Heart right ventricle (tissue), 16 donors: ENCODE measurements at regions of chr9 and their contacts with region 1.

Region 1: DNA sequence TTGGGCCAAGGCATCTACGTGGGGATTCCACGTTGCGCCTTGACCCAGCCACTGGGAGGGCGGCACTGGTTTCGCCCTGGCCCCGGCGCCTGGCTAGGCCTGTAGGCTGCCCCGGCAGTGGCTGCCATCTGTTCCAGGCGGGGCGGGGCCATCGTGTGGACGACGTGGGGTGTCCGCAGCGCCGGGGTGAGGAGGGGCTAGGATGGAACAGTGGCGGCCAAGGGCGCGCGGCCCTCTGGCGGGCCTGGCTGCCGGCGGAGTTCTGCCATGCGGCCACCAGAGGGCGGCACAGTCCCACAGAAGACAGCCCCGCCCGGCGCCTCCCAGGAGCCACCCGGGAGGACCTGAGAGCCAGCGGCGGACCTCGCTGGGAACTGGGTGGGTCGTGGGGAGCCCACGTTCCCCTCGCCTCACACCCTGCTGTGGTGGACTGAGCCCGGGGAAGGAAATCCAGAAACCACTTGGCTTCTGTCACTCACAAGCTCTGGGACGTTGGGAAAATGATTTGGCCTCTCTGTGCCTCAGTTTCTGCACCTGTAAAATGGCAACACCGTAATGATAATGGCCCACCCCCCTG is 22.6 kb upstream of the RAPGEF1 start:
- DNase-seq: peak; percentile 53 to 79
- ATAC-seq: peak; percentile 89 to 94 (median 92)
- H3K4me3 ChIP-seq: no peak overlapping the region
- H3K27ac ChIP-seq: no peak overlapping the region
- H3K4me1 ChIP-seq: peaks cover 0 to 8% (median 4%) of the 10 kb centered on the region in 9 donors
- H3K27me3 ChIP-seq: peaks cover 0 to 17% (median 9%) of the 10 kb centered on the region in 7 donors
- CTCF ChIP-seq: peak; percentile 83 to 97 (median 96)

Region 2: DNA sequence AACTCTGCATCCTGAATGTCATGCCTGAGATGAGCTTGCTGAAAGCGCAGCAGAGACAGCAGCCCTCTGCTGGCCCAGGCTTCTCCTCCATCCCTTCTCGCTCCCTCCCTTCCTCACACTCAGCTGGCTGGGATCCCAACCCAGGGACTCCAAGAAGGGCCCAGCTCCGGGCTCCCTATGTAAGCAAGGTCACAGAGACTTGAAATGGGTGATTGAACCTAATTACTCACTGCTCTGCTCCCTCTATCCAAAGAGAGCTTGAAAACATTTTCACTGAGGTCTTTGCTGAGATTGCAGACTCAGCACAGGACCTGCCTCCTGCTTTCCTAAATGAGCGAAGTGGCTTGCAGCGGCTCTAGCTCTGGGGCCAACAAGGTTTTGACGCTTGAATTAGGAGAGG is 65.3 kb before region 1 on chr9:
- intact Hi-C with region 1: no loop called
- DNase-seq: peak in 1 of 2 donors; percentile 50
- ATAC-seq: peak in 7 of 8 donors; percentile 31 to 63 (median 46)
- H3K4me3 ChIP-seq: no peak overlapping the region
- H3K27ac ChIP-seq: peak overlapping the region in 8 of 10 donors; percentile 25 to 95 (median 85)
- H3K4me1 ChIP-seq: peaks cover 31 to 98% (median 93%) of the 10 kb centered on the region in 9 donors
- H3K27me3 ChIP-seq: no peaks in the 10 kb centered on the region
- CTCF ChIP-seq: peak in 3 of 9 donors; percentile 33 to 45 (median 40)

Region 3: GRCh38 chr9:132163457-132163875 is 401.0 kb after region 1 on chr9:
- intact Hi-C with region 1: loop called in 2 of 10 experiments (anchors 1 to 5 kb)
- DNase-seq: no peak
- ATAC-seq: peak in 2 of 8 donors; percentile 35 to 37
- H3K4me3 ChIP-seq: peak overlapping the region; percentile 16 to 82 (median 67)
- H3K27ac ChIP-seq: peak overlapping the region in 2 of 10 donors; percentile 9 to 18
- H3K4me1 ChIP-seq: peaks cover 22 to 43% (median 35%) of the 10 kb centered on the region in 9 donors
- H3K27me3 ChIP-seq: peaks cover 6 to 89% (median 70%) of the 10 kb centered on the region in 7 donors
- CTCF ChIP-seq: no peak

Region 4: DNA sequence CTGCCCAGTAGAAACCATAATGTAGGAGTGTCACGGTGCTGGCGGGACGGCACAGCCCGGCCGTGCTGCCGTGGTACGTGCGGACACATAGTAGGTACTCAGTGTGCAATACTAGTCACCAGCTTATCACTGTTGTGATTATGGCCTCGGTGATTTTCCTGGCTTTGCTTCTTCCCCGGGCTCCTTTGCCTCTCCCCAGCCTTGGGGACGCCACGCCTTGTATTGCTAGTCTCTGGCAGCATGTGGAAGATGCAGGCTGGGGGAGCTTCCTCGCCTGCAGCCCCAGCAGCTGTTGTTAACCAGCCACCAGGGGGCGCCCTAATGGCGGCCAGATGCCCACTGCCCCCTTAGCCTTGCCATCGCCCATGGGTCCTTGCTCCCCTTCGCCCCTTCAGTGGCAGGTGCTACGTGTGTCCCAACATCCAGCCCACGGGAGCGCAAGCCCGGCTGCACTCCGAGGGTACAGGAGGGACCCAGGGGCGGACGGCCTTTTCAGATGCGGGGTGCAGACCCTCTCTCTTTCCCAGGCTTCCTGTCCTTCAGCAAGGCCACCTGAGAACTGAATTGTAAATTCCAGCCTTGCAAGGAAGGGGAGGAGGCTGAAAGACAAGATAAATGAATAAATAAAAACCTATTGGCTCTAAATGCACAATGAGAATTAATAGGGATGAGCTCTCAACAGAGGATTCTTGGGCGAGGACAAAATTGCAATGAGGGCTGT is 407.4 kb after region 1 on chr9:
- intact Hi-C with region 1: loop called in 1 of 10 experiments (anchors 5 kb)
- DNase-seq: peak in 1 of 2 donors; percentile 48
- ATAC-seq: peak; percentile 44 to 82 (median 62)
- H3K4me3 ChIP-seq: no peak overlapping the region
- H3K27ac ChIP-seq: no peak overlapping the region
- H3K4me1 ChIP-seq: peaks cover 0 to 16% (median 7%) of the 10 kb centered on the region in 9 donors
- H3K27me3 ChIP-seq: peaks cover 0 to 48% (median 38%) of the 10 kb centered on the region in 7 donors
- CTCF ChIP-seq: peak; percentile 78 to 94 (median 83)

Region 5: GRCh38 chr9:132235946-132236661 is 473.7 kb after region 1 on chr9:
- intact Hi-C with region 1: loop called in 8 of 10 experiments (anchors 2 to 5 kb)
- DNase-seq: peak; percentile 72 to 76
- ATAC-seq: peak in 6 of 8 donors; percentile 12 to 43 (median 28)
- H3K4me3 ChIP-seq: no peak overlapping the region
- H3K27ac ChIP-seq: no peak overlapping the region
- H3K4me1 ChIP-seq: peaks cover 0 to 39% (median 6%) of the 10 kb centered on the region in 9 donors
- H3K27me3 ChIP-seq: peaks cover 0 to 20% (median 11%) of the 10 kb centered on the region in 7 donors
- CTCF ChIP-seq: peak; percentile 91 to 99 (median 96)

Region 6: DNA sequence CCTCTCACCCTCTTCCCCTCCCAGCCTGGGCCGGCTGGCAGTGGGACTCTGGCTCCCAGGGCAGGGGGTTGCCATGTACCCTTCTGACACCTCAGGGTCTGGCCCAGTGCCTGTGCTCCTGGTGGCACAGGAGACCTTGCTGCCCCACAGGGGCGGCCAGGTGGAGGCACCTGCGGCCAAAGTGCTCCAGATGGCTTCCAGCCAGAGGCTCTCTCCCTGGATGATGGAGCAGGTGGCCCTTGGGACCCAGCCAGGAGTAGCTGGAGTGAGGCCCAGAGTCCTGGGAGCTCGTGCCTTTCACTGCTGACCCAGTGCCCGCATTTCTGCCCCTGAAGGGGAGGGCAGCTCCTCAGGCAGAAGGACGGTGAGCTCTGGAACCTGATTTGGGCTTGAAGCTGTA is 486.7 kb after region 1 on chr9:
- intact Hi-C with region 1: loop called in 8 of 10 experiments (anchors 1 to 5 kb)
- DNase-seq: no peak
- ATAC-seq: peak in 2 of 8 donors; percentile 46 to 54
- H3K4me3 ChIP-seq: no peak overlapping the region
- H3K27ac ChIP-seq: no peak overlapping the region
- H3K4me1 ChIP-seq: peaks cover 0 to 22% (median 9%) of the 10 kb centered on the region in 9 donors
- H3K27me3 ChIP-seq: peaks cover 0 to 31% (median 14%) of the 10 kb centered on the region in 7 donors
- CTCF ChIP-seq: no peak

Region 7: DNA sequence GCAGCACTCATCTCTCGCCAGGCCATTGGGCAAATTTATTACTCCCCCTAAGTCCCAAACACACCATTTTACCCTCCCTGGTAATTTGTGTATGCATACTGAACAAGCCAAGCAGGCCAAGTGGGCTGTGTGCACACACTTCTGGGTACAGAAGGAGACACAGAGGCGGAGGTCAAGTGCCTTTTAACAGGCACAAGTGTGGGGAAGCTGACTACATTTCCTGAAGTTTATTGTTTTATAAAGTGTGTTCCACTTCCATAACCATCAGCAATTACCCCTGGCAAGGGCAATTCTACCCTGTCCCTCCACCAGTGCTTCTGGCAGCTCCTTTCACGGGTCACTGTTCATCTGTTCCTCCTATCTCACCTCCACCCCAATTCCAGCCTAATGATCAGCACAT is 498.4 kb after region 1 on chr9:
- intact Hi-C with region 1: loop called in 5 of 10 experiments (anchors 2 to 5 kb)
- DNase-seq: no peak
- ATAC-seq: no peak
- H3K4me3 ChIP-seq: no peak overlapping the region
- H3K27ac ChIP-seq: no peak overlapping the region
- H3K4me1 ChIP-seq: peaks cover 0 to 39% (median 12%) of the 10 kb centered on the region in 9 donors
- H3K27me3 ChIP-seq: no peaks in the 10 kb centered on the region
- CTCF ChIP-seq: no peak

Region 8: GRCh38 chr9:132268725-132269352 is 506.4 kb after region 1 on chr9:
- intact Hi-C with region 1: loop called in 6 of 10 experiments (anchors 1 to 5 kb)
- DNase-seq: peak; percentile 64 to 66
- ATAC-seq: peak; percentile 28 to 70 (median 60)
- H3K4me3 ChIP-seq: no peak overlapping the region
- H3K27ac ChIP-seq: peak overlapping the region in 4 of 10 donors; percentile 17 to 71 (median 36)
- H3K4me1 ChIP-seq: peaks cover 0 to 42% (median 17%) of the 10 kb centered on the region in 9 donors
- H3K27me3 ChIP-seq: no peaks in the 10 kb centered on the region
- CTCF ChIP-seq: peak; percentile 83 to 94 (median 91)